ENCODE measurements at regions of chr2 and their contacts with region 1.

Region 1: GRCh38 chr2:38315707-38316333 is 61.3 kb downstream of the ATL2 start:
- DNase-seq: peak; percentile 31
- ATAC-seq: peak; percentile 85
- H3K4me3 ChIP-seq: no peak overlapping the region
- H3K27ac ChIP-seq: no peak overlapping the region
- H3K4me1 ChIP-seq: no peaks in the 10 kb centered on the region
- H3K27me3 ChIP-seq: no peaks in the 10 kb centered on the region
- CTCF ChIP-seq: peak; percentile 70 to 80 (median 77)
- POLR2A ChIP-seq: no peak
- RAD21 ChIP-seq: peak; percentile 88

Region 2: GRCh38 chr2:38465789-38466127 is 149.9 kb after region 1 on chr2:
- CTCF ChIA-PET with region 1: interaction called, 23 read pairs
- POLR2A ChIA-PET with region 1: no interaction called
- RAD21 ChIA-PET with region 1: interaction called, 3 to 4 read pairs
- intact Hi-C with region 1: loop called (anchors 1 kb)
- DNase-seq: peak; percentile 54
- ATAC-seq: peak; percentile 64
- H3K4me3 ChIP-seq: no peak overlapping the region
- H3K27ac ChIP-seq: no peak overlapping the region
- H3K4me1 ChIP-seq: peaks cover 23 to 35% of the 10 kb centered on the region in 2 experiments
- H3K27me3 ChIP-seq: peaks cover 5% of the 10 kb centered on the region; the same call in 1 of the 2 replicates
- CTCF ChIP-seq: peak; percentile 60 to 73 (median 72); a peak in 5 of 6 replicates
- POLR2A ChIP-seq: no peak
- RAD21 ChIP-seq: peak; percentile 80

Region 3: GRCh38 chr2:38508311-38509039 is 192.7 kb after region 1 on chr2:
- CTCF ChIA-PET with region 1: interaction called, 31 read pairs
- POLR2A ChIA-PET with region 1: interaction called, 3 read pairs
- RAD21 ChIA-PET with region 1: interaction called in 1 of 2 experiments, 4 read pairs
- intact Hi-C with region 1: loop called (anchors 1 kb)
- DNase-seq: peak; percentile 81
- ATAC-seq: peak; percentile 81
- H3K4me3 ChIP-seq: no peak overlapping the region
- H3K27ac ChIP-seq: no peak overlapping the region
- H3K4me1 ChIP-seq: peaks cover 8 to 17% of the 10 kb centered on the region in 2 experiments; a peak in 3 of 4 replicates
- H3K27me3 ChIP-seq: no peaks in the 10 kb centered on the region
- CTCF ChIP-seq: peak; percentile 37 to 70 (median 69); a peak in 4 of 6 replicates
- POLR2A ChIP-seq: no peak
- RAD21 ChIP-seq: peak; percentile 91

Region 4: DNA sequence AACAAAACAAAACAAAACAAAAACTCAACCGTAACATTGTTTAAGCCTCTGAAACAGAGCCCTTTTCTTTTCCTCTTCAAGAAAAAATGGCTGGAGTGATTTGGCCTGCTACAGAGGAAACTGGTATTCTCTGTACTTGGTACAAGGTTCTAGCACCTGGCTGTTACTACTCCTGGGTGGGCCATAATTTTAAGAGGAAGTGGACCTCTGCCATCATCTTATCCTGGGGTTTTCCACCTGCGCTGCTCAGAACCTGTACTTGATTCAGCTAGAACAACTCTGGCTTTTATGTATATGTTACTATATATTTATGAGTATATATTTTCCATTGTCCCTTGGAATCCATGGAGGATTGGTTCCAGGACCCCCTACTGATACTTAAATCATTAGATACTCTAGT is 412.9 kb after region 1 on chr2:
- CTCF ChIA-PET with region 1: no interaction called
- POLR2A ChIA-PET with region 1: no interaction called
- RAD21 ChIA-PET with region 1: no interaction called
- intact Hi-C with region 1: loop called (anchors 2 kb)
- DNase-seq: no peak
- ATAC-seq: no peak
- H3K4me3 ChIP-seq: no peak overlapping the region
- H3K27ac ChIP-seq: no peak overlapping the region
- H3K4me1 ChIP-seq: 0 out of 4 replicates have a peak, but pooled peaks cover 0 to 2% of the 10 kb centered on the region in 2 experiments
- H3K27me3 ChIP-seq: no peaks in the 10 kb centered on the region
- CTCF ChIP-seq: no peak
- POLR2A ChIP-seq: no peak
- RAD21 ChIP-seq: no peak

Region 5: DNA sequence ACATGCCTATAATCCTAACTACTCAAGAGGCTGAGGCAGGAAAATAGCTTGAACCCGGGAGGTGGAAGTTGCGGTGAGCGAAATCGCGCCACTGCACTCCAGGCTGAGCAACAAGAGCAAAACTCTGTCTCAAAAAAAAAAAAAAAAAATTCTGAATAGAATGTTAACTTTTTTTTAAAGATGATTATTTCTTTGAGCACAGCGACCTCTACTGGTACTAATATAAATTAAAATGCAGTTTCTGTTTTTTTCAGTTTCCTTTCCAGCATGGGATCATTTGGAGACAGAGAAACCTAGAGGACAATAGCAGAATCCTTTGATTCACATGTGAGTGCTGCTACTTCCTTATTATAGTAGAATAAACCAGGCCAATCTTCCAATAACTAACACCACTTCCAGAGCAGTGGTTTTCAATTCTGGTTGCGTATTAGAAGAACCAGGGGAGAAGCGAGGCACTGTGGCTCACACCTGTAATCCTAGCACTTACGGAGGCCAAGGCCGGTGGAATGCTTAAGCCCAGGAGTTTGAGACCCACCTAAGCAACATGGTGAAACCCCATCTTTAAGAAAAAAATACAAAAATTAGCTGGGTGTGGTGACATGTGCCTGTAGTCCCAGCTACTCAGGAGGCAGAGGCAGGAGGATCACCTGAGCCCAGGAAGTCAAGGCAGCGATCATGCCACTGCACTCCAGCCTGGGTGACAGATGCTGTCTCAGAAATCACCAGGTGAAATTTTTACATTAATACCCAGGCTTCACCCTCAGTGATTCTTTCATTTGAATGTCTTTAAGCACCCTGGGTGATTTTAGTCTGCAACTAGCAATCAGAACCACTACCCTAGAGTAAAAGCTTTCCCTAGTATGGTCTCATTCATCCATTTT is 425.3 kb after region 1 on chr2:
- CTCF ChIA-PET with region 1: no interaction called
- POLR2A ChIA-PET with region 1: no interaction called
- RAD21 ChIA-PET with region 1: no interaction called
- intact Hi-C with region 1: loop called (anchors 5 kb)
- DNase-seq: no peak
- ATAC-seq: peak; percentile 56
- H3K4me3 ChIP-seq: no peak overlapping the region
- H3K27ac ChIP-seq: 0 out of 2 replicates have a peak overlapping the region, but pooled peaks have one; percentile 0
- H3K4me1 ChIP-seq: no peaks in the 10 kb centered on the region
- H3K27me3 ChIP-seq: no peaks in the 10 kb centered on the region
- CTCF ChIP-seq: peak in 2 of 3 experiments; percentile 41 to 56; a peak in 3 of 6 replicates
- POLR2A ChIP-seq: no peak
- RAD21 ChIP-seq: peak; percentile 61

Measured in HCT116 (cell line).